Heart left ventricle (tissue), 16 donors: ENCODE measurements at regions of chrX and their contacts with region 1.

Region 1: DNA sequence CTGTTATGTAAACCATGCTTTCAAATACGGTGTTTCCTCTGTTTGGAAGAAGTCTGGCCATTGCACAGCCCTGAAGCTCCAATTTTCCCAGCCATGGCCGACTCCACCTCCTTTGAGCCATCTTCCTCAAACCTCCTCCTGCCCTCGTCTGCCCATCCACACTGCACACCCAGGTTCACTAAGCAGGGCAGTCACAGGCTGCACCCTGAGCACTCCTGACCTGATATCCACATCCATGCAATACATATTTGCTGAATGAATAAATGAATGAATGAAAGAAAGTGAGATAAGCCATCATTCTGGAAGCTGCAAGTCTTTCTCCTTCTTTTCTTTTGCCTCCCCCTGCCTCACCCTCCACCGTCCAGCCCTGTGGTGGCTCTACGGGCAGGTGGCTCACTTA is 22.2 kb downstream of the XG start:
- DNase-seq: no peak
- ATAC-seq: no peak
- H3K4me3 ChIP-seq: no peak overlapping the region
- H3K27ac ChIP-seq: no peak overlapping the region
- H3K4me1 ChIP-seq: no peaks in the 10 kb centered on the region
- H3K27me3 ChIP-seq: peaks cover 0 to 11% (median 0%) of the 10 kb centered on the region in 9 donors
- CTCF ChIP-seq: no peak
- POLR2A ChIP-seq: no peak

Region 2: GRCh38 chrX:2811271-2811670 is 37.2 kb after region 1 on chrX:
- intact Hi-C with region 1: no loop called
- DNase-seq: no peak
- ATAC-seq: no peak
- H3K4me3 ChIP-seq: no peak overlapping the region
- H3K27ac ChIP-seq: no peak overlapping the region
- H3K4me1 ChIP-seq: peaks cover 0 to 4% (median 0%) of the 10 kb centered on the region in 12 donors
- H3K27me3 ChIP-seq: peaks cover 0 to 15% (median 0%) of the 10 kb centered on the region in 9 donors
- CTCF ChIP-seq: no peak
- POLR2A ChIP-seq: no peak

Region 3: DNA sequence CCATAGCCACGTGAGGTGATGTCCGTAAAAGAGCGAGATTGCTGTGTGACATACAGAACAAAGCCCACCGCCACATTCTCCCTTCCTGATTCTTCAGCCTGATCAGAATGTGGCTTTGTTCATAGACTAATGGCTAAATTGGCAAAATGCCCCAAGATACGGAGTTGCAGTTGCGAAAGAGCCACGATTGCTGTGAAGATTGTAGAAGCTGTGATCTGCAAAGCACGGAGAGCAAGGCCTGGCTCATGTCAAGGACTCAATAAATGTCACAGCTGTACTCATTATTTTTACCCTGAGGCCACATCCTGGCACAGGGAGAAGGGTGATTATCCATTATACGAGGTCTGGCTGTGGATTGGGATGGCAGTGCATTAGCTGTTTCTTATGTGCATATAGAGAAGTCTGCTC is 120.8 kb after region 1 on chrX:
- intact Hi-C with region 1: loop called in 1 of 10 experiments (anchors 5 kb)
- DNase-seq: no peak
- ATAC-seq: peak in 1 of 4 donors; percentile 59
- H3K4me3 ChIP-seq: no peak overlapping the region
- H3K27ac ChIP-seq: no peak overlapping the region
- H3K4me1 ChIP-seq: peaks cover 0 to 22% (median 0%) of the 10 kb centered on the region in 12 donors
- H3K27me3 ChIP-seq: peaks cover 0 to 4% (median 0%) of the 10 kb centered on the region in 9 donors
- CTCF ChIP-seq: no peak
- POLR2A ChIP-seq: no peak

Region 4: DNA sequence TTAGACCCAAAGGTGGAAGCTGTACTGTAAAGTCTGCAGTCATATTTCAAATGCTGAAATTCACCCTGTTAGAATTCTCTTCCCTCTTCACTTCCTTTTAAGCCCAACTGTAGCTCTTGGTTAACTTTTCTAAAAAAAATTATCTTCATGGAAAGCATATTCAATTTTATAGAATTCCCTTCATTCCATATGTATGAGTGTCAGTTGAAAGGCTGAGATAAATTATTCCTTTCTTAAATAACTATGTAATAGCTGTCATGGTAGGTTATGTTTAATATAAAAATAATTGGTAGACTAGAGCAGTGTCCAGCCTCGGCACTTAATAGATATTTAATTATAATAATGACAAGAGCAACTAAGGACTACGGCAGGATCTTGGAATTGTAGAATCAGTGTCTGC is 215.5 kb after region 1 on chrX:
- intact Hi-C with region 1: no loop called
- DNase-seq: no peak
- ATAC-seq: no peak
- H3K4me3 ChIP-seq: no peak overlapping the region
- H3K27ac ChIP-seq: no peak overlapping the region
- H3K4me1 ChIP-seq: no peaks in the 10 kb centered on the region
- H3K27me3 ChIP-seq: peaks cover 0 to 4% (median 0%) of the 10 kb centered on the region in 9 donors
- CTCF ChIP-seq: no peak
- POLR2A ChIP-seq: no peak